ENCODE measurements at regions of chr18 and their contacts with region 1.

Region 1: GRCh38 chr18:69490813-69491212 is 90.1 kb downstream of the DOK6 start:
- DNase-seq: no peak
- H3K4me3 ChIP-seq: no peak overlapping the region
- H3K27ac ChIP-seq: no peak overlapping the region
- H3K4me1 ChIP-seq: no peaks in the 10 kb centered on the region
- H3K27me3 ChIP-seq: no peaks in the 10 kb centered on the region
- CTCF ChIP-seq: no peak
- POLR2A ChIP-seq: no peak

Region 2: DNA sequence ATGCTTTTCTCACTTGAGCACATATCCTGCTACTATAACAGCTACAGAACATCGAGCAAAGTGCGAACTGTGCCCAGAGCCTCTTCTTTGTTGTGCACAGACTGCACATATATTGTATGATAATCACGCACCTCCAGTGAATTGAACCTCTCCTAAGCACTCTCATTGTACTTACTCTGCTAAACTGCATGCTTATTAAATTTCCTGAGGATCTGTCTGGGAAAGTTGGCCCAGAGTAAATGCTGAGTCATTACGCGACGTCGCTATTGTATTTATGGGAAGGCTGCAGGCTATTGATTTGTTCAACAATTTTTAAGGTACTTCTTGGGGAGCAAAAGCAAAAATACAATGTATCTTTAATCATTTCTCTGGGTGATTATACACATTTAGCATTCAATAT is 1574.7 kb before region 1 on chr18:
- intact Hi-C with region 1: no loop called
- DNase-seq: no peak
- H3K4me3 ChIP-seq: no peak overlapping the region
- H3K27ac ChIP-seq: no peak overlapping the region
- H3K4me1 ChIP-seq: no peaks in the 10 kb centered on the region
- H3K27me3 ChIP-seq: no peaks in the 10 kb centered on the region
- CTCF ChIP-seq: no peak
- POLR2A ChIP-seq: no peak

Region 3: GRCh38 chr18:68498185-68498584 is 992.6 kb before region 1 on chr18:
- intact Hi-C with region 1: no loop called
- DNase-seq: no peak
- H3K4me3 ChIP-seq: no peak overlapping the region
- H3K27ac ChIP-seq: no peak overlapping the region
- H3K4me1 ChIP-seq: no peaks in the 10 kb centered on the region
- H3K27me3 ChIP-seq: no peaks in the 10 kb centered on the region
- CTCF ChIP-seq: no peak
- POLR2A ChIP-seq: no peak

Region 4: GRCh38 chr18:69109686-69110085 is 381.1 kb before region 1 on chr18:
- intact Hi-C with region 1: loop called (anchors 5 kb)
- DNase-seq: no peak
- H3K4me3 ChIP-seq: no peak overlapping the region
- H3K27ac ChIP-seq: no peak overlapping the region
- H3K4me1 ChIP-seq: no peaks in the 10 kb centered on the region
- H3K27me3 ChIP-seq: no peaks in the 10 kb centered on the region
- CTCF ChIP-seq: no peak
- POLR2A ChIP-seq: no peak